H1 (cell line): ENCODE measurements at regions of chr19 and their contacts with region 1.

Region 1: GRCh38 chr19:44653977-44654774 is 10.5 kb downstream of the PVR start:
- DNase-seq: peak in 1 of 2 experiments; percentile 83
- H3K4me3 ChIP-seq: no peak overlapping the region
- H3K27ac ChIP-seq: no peak overlapping the region
- H3K4me1 ChIP-seq: peaks cover 0 to 2% (median 0%) of the 10 kb centered on the region in 4 experiments; a peak in 2 of 7 replicates
- H3K27me3 ChIP-seq: no peaks in the 10 kb centered on the region
- CTCF ChIP-seq: peak; percentile 71 to 82 (median 75)
- EP300 ChIP-seq: no peak
- POLR2A ChIP-seq: no peak
- RAD21 ChIP-seq: peak; percentile 69 to 77

Region 2: GRCh38 chr19:44576843-44577565 is 77.2 kb before region 1 on chr19:
- CTCF ChIA-PET with region 1: interaction called, 126 read pairs
- POLR2A ChIA-PET with region 1: interaction called, 4 read pairs
- DNase-seq: no peak
- H3K4me3 ChIP-seq: no peak overlapping the region
- H3K27ac ChIP-seq: no peak overlapping the region
- H3K4me1 ChIP-seq: no peaks in the 10 kb centered on the region
- H3K27me3 ChIP-seq: no peaks in the 10 kb centered on the region
- CTCF ChIP-seq: peak; percentile 77 to 83 (median 78)
- EP300 ChIP-seq: no peak
- POLR2A ChIP-seq: no peak
- RAD21 ChIP-seq: peak; percentile 80 to 83

Region 3: GRCh38 chr19:44587963-44588770 is 66.0 kb before region 1 on chr19:
- CTCF ChIA-PET with region 1: interaction called, 13 read pairs
- POLR2A ChIA-PET with region 1: interaction called, 4 read pairs
- DNase-seq: no peak
- H3K4me3 ChIP-seq: no peak overlapping the region
- H3K27ac ChIP-seq: no peak overlapping the region
- H3K4me1 ChIP-seq: no peaks in the 10 kb centered on the region
- H3K27me3 ChIP-seq: no peaks in the 10 kb centered on the region
- CTCF ChIP-seq: no peak
- EP300 ChIP-seq: no peak
- POLR2A ChIP-seq: no peak
- RAD21 ChIP-seq: 0 out of 4 replicates have a peak, but pooled peaks of 1 of the 2 experiments have one; percentile 7

Region 4: GRCh38 chr19:44626048-44626624 is 28.0 kb before region 1 on chr19:
- CTCF ChIA-PET with region 1: interaction called, 15 read pairs
- POLR2A ChIA-PET with region 1: interaction called, 3 read pairs
- DNase-seq: no peak
- H3K4me3 ChIP-seq: no peak overlapping the region
- H3K27ac ChIP-seq: no peak overlapping the region
- H3K4me1 ChIP-seq: no peaks in the 10 kb centered on the region
- H3K27me3 ChIP-seq: no peaks in the 10 kb centered on the region; a peak in 1 of 7 replicates
- CTCF ChIP-seq: no peak
- EP300 ChIP-seq: no peak
- POLR2A ChIP-seq: no peak
- RAD21 ChIP-seq: no peak

Region 5: DNA sequence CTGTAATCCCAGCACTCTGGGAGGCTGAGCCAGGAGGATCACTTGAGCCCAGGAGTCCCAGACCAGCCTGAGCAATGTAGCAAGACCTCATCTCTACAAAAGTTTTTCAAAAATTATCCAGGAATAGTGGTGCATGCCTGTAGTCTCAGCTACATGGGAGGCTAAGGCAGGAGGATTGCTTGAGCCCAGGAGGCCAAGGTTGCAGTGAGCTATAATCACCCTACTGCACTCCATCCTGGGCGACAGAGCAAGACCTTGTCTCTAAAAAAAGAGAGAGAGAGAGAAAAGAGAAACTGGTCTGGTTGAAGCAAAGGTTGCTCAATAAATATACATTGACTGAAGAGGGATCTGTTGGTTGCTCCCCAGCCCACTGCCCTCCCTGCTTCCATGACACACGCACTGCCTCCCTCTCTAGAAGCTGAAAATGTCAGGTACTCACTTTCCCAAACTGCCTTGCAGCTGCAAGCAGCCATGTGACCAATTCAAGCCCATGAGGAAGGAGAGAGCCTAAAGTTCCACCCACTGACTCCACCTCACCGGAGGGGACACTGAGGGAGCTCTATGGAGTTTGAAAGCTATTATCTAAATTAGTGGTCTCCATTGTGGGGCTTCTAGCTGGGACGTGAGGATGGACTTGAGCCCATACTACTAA is 58.8 kb after region 1 on chr19:
- CTCF ChIA-PET with region 1: interaction called, 10 read pairs
- POLR2A ChIA-PET with region 1: no interaction called
- DNase-seq: no peak
- H3K4me3 ChIP-seq: no peak overlapping the region
- H3K27ac ChIP-seq: no peak overlapping the region
- H3K4me1 ChIP-seq: no peaks in the 10 kb centered on the region
- H3K27me3 ChIP-seq: no peaks in the 10 kb centered on the region
- CTCF ChIP-seq: no peak
- EP300 ChIP-seq: no peak
- POLR2A ChIP-seq: no peak
- RAD21 ChIP-seq: no peak